ENCODE measurements at regions of chr1 and their contacts with region 1.

Region 1: GRCh38 chr1:89358287-89358893 is 5.5 kb upstream of the GBP6 start:
- DNase-seq: peak; percentile 76 to 81 (median 77)
- H3K4me3 ChIP-seq: no peak overlapping the region
- H3K4me3 Mint-ChIP-seq: peak overlapping the region in 5 of 8 donors; percentile 0 to 80 (median 57)
- H3K27ac ChIP-seq: no peak overlapping the region
- H3K27ac Mint-ChIP-seq: peak overlapping the region in 5 of 7 donors; percentile 50 to 66 (median 57)
- H3K4me1 ChIP-seq: peaks cover 27% of the 10 kb centered on the region
- H3K4me1 Mint-ChIP-seq: peaks cover 15 to 29% (median 25%) of the 10 kb centered on the region in 4 donors
- H3K27me3 ChIP-seq: no peaks in the 10 kb centered on the region
- H3K27me3 Mint-ChIP-seq: no peaks in the 10 kb centered on the region

Region 2: DNA sequence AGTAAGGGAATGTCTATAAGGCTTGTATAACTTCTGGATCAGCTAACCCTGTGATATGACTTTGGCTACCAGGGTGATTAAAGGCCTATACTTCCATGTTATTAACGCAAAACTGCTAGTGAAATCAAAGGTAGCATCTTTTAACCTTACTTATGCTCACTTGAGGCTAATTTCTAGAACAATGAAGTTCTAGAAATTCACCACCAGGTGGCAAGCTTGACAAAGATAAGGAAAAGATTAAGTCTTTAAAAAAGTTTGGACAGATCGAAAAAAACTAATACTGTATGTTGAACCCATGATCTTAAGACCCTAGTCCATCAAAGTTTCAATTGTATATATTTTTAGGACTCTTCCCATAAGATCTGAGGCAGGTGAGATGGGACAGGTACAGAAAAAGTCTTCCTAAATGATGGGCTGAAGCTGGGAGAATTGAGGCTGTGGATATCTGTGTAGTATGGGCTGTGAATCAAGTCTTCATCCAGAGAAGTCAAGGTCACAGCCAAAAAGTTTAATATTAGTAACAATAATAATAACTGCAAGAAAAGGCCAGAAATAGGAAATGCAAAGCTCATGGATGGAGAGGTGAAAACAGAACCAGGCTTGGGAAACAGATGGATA is 384.8 kb before region 1 on chr1:
- CTCF ChIA-PET with region 1: interaction called, 6 read pairs
- POLR2A ChIA-PET with region 1: no interaction called
- intact Hi-C with region 1: loop called (anchors 1 kb)
- DNase-seq: peak in 4 of 5 donors; percentile 25 to 39 (median 33)
- H3K4me3 ChIP-seq: no peak overlapping the region
- H3K4me3 Mint-ChIP-seq: peak overlapping the region in 1 of 8 donors; percentile 0
- H3K27ac ChIP-seq: no peak overlapping the region
- H3K27ac Mint-ChIP-seq: peak overlapping the region in 3 of 7 donors; percentile 2 to 74 (median 26)
- H3K4me1 ChIP-seq: peaks cover 8% of the 10 kb centered on the region
- H3K4me1 Mint-ChIP-seq: peaks cover 15 to 23% (median 15%) of the 10 kb centered on the region in 4 donors
- H3K27me3 ChIP-seq: no peaks in the 10 kb centered on the region
- H3K27me3 Mint-ChIP-seq: no peaks in the 10 kb centered on the region

Region 3: DNA sequence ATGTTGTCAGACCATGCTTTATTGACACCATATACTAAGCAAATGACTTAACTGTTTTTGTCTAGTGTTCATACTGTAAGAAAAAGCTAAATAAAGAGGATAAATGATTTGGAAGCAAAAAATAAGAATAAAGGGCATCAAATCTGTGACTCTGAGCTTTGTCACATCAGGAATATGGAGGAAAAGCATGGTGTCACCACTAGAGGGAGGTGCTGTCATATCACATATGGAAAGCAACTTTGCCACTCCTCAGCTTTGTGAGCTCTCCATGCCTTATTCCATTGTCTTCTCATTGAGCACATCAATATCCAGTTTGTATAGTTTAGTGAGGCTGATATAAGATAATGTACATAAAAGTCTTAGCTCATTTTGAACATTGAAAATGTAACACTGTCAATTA is 272.6 kb before region 1 on chr1:
- CTCF ChIA-PET with region 1: interaction called, 50 read pairs
- POLR2A ChIA-PET with region 1: interaction called, 5 read pairs
- intact Hi-C with region 1: loop called (anchors 1 kb)
- DNase-seq: peak in 4 of 5 donors; percentile 45 to 66 (median 48)
- H3K4me3 ChIP-seq: no peak overlapping the region
- H3K4me3 Mint-ChIP-seq: no peak overlapping the region
- H3K27ac ChIP-seq: no peak overlapping the region
- H3K27ac Mint-ChIP-seq: no peak overlapping the region
- H3K4me1 ChIP-seq: no peaks in the 10 kb centered on the region
- H3K4me1 Mint-ChIP-seq: peaks cover 0 to 4% (median 2%) of the 10 kb centered on the region in 4 donors
- H3K27me3 ChIP-seq: no peaks in the 10 kb centered on the region
- H3K27me3 Mint-ChIP-seq: no peaks in the 10 kb centered on the region

Region 4: DNA sequence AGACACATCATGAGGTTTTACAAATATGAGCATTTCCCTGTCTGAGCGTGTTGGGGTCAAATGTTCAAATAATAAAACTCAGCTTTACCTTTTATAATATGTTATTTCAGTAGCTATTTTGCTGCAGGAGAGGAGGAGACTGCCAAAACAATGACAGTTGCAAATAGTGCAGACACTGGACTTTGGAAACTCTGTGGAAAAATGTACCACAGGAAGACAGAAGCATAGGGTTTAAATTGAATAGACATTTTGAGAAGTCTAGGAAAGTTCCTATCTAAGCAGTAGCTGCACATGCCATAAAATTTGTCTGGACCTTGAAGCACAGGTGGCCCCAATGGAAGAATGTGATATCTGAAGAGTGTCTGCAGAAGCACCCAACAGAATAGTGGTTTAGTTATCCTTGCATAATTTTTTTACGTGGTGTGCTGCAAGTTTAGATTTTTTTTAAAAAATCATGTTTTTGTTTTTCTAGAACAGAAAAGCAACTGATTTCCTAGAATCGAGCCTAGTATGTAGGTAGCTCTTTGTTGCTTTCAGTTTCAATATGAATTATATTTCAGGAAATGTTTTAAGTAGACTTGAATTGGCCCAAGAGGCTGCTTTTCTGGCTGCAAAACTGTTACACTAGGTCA is 71.7 kb before region 1 on chr1:
- CTCF ChIA-PET with region 1: interaction called, 17 read pairs
- POLR2A ChIA-PET with region 1: interaction called, 4 read pairs
- intact Hi-C with region 1: no loop called
- DNase-seq: peak in 4 of 5 donors; percentile 39 to 58 (median 46)
- H3K4me3 ChIP-seq: peak overlapping the region; percentile 14 to 21
- H3K4me3 Mint-ChIP-seq: peak overlapping the region; percentile 45 to 78 (median 76)
- H3K27ac ChIP-seq: peak overlapping the region; percentile 61
- H3K27ac Mint-ChIP-seq: peak overlapping the region; percentile 83 to 96 (median 94)
- H3K4me1 ChIP-seq: peaks cover 67% of the 10 kb centered on the region
- H3K4me1 Mint-ChIP-seq: peaks cover 60 to 76% (median 69%) of the 10 kb centered on the region in 4 donors
- H3K27me3 ChIP-seq: no peaks in the 10 kb centered on the region
- H3K27me3 Mint-ChIP-seq: no peaks in the 10 kb centered on the region

Region 5: GRCh38 chr1:89454845-89455521 is 96.6 kb after region 1 on chr1:
- CTCF ChIA-PET with region 1: interaction called, 5 read pairs
- POLR2A ChIA-PET with region 1: no interaction called
- intact Hi-C with region 1: loop called (anchors 2 kb)
- DNase-seq: peak; percentile 67 to 73 (median 69)
- H3K4me3 ChIP-seq: no peak overlapping the region
- H3K4me3 Mint-ChIP-seq: no peak overlapping the region
- H3K27ac ChIP-seq: no peak overlapping the region
- H3K27ac Mint-ChIP-seq: peak overlapping the region in 2 of 7 donors; percentile 48 to 68
- H3K4me1 ChIP-seq: peaks cover 11% of the 10 kb centered on the region
- H3K4me1 Mint-ChIP-seq: peaks cover 9 to 14% (median 12%) of the 10 kb centered on the region in 4 donors
- H3K27me3 ChIP-seq: no peaks in the 10 kb centered on the region
- H3K27me3 Mint-ChIP-seq: peaks cover 1 to 2% of the 10 kb centered on the region in 2 donors

Measured in CD4-positive, alpha-beta memory T cell (primary cell).